ENCODE measurements at regions of chr10 and their contacts with region 1.

Region 1: DNA sequence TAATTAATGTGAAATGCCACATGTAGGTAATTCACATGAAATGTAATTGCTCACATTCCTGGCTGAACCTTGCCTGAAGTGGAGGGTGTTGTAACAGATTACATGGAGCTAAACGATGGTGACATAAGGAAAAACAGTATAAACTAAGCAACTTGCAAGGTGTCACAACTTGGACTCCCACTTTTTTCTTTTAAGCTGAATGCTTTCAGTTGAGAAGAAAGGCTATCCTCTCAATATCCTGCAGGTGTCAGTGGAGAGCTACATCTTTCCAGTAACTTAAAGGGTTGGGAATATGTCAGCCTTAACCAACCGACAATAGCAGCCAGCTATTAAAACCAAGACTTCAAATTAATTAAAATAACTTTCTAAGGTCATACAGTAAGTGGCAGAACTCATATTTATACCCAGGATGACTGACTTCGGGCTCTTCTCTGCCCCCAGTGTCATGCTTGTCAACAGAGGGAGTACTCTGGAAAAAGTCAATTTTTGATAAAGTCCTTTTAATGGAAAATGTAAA is 33.7 kb downstream of the NRBF2 start:
- DNase-seq: no peak
- ATAC-seq: peak; percentile 79
- H3K4me3 ChIP-seq: no peak overlapping the region
- H3K27ac ChIP-seq: no peak overlapping the region
- H3K4me1 ChIP-seq: no peaks in the 10 kb centered on the region
- H3K27me3 ChIP-seq: no peaks in the 10 kb centered on the region

Region 2: DNA sequence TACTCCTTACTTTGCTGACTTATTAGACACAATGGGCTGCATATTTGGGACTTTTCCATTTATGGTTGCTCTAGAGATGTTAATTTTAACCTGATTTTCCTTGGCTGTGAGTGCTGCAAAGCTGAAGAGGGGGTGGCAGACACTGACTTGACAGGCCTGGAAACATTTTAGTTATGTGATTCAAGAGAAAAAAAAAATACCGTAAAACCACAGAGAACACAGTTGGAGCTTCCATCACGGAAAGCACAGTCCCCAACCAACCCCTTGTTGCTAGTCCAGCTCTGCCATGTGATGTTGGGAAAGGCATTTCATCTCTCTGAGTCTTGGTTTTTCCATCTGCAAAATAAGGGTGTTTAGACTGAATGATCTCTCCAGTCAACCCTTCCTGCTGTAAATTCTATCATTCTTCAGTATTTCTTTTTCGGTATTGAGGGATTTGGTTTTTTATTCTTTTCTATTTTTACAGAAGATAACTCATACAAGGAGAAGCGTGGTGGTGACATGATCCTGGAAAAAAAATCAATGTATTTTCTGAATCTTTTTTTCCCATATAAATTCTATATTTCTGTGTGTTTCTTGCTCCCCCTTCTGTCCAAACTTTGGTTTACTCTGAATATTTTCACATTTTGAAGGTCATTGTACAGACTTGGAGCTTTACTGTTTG is 600.5 kb after region 1 on chr10:
- intact Hi-C with region 1: loop called in 1 of 2 experiments (anchors 5 kb)
- DNase-seq: no peak
- ATAC-seq: no peak
- H3K4me3 ChIP-seq: no peak overlapping the region
- H3K27ac ChIP-seq: peak overlapping the region; percentile 28 to 36
- H3K4me1 ChIP-seq: peaks cover 0 to 3% of the 10 kb centered on the region in 2 donors
- H3K27me3 ChIP-seq: no peaks in the 10 kb centered on the region

Region 3: DNA sequence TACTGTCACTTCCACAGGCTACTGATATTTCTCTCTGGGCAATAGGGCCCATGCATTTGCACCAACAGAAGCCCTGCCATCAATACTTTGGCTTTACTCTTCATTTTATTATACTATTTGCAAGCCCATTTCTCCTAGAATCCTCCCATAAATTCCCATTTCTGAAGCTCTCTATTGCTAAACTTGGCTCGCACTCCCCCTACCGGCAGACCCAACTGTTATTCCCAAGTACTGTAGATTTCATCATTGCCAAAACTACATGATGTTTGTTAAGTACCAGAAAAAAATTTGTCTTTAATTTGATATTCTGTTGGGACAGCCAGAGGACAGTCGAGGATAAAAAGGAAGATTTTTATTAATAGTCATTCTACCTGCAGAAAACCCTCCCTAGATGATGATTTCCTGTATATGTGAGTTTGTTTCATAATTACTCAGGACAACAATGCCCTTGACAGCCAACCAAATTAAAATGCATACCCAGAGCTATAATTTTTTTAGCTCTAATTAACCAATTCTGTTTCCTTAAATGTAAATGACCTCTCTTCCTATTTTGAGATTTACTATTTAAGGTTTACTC is 653.0 kb after region 1 on chr10:
- intact Hi-C with region 1: loop called in 1 of 2 experiments (anchors 5 kb)
- DNase-seq: peak; percentile 84 to 90
- ATAC-seq: peak; percentile 66
- H3K4me3 ChIP-seq: no peak overlapping the region
- H3K27ac ChIP-seq: no peak overlapping the region
- H3K4me1 ChIP-seq: no peaks in the 10 kb centered on the region
- H3K27me3 ChIP-seq: no peaks in the 10 kb centered on the region

Measured in aorta (tissue), 5 donors.